CD14-positive monocyte (primary cell): ENCODE measurements at regions of chr6 and their contacts with region 1.

Region 1: DNA sequence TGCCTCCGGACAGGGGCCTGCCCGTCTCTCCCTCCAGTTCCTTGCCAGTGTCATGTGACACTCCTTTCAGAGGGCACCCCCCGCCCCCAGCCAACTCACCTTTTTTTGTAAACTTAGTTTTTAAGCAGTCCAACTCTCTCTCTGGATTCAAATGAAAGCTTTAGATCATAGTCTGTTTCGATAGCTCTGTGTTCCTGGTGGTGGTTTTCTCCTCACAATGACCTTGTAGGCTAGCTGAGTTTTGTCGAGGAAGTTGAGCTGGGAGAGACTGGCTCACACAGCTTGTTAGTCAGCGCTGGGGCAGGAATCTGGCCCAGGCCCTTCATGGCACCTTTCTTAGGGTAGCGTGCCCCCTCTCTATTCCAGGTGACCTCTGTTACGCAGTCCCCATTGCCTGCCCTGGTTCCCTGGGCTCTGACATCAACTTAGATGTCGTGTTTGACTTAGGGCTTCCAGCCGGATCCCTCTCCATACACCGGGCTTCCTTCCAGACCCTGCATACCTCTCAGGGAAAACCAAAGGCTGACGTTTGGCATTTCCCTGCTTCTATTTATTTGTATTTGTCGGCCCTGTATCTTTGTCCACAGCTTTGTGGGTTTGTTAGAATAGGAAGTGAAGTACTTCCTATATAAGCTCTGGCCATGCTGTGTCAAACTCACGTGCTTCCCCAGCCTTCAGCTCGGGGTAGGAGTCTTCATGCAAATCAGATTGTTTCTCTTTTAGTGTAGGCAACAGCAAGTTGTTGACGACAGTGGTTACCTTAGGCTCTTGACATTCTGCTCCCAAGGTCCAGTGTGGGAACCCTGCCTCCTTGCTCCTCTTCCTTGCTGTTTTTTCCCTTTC is 12.7 kb downstream of the IGF2R start:
- DNase-seq: peak; percentile 90 to 95 (median 95)
- H3K4me3 ChIP-seq: peak overlapping the region; percentile 10 to 59 (median 21)
- H3K4me3 Mint-ChIP-seq: peak overlapping the region; percentile 71 to 85
- H3K27ac ChIP-seq: peak overlapping the region; percentile 85 to 97
- H3K27ac Mint-ChIP-seq: peak overlapping the region; percentile 91 to 99 (median 96)
- H3K4me1 ChIP-seq: peaks cover 78 to 94% of the 10 kb centered on the region in 2 donors
- H3K4me1 Mint-ChIP-seq: peaks cover 92% of the 10 kb centered on the region
- H3K27me3 ChIP-seq: peaks cover 0 to 30% of the 10 kb centered on the region in 2 donors
- H3K27me3 Mint-ChIP-seq: peaks cover 37 to 51% (median 50%) of the 10 kb centered on the region in 3 donors
- CTCF ChIP-seq: no peak

Region 2: DNA sequence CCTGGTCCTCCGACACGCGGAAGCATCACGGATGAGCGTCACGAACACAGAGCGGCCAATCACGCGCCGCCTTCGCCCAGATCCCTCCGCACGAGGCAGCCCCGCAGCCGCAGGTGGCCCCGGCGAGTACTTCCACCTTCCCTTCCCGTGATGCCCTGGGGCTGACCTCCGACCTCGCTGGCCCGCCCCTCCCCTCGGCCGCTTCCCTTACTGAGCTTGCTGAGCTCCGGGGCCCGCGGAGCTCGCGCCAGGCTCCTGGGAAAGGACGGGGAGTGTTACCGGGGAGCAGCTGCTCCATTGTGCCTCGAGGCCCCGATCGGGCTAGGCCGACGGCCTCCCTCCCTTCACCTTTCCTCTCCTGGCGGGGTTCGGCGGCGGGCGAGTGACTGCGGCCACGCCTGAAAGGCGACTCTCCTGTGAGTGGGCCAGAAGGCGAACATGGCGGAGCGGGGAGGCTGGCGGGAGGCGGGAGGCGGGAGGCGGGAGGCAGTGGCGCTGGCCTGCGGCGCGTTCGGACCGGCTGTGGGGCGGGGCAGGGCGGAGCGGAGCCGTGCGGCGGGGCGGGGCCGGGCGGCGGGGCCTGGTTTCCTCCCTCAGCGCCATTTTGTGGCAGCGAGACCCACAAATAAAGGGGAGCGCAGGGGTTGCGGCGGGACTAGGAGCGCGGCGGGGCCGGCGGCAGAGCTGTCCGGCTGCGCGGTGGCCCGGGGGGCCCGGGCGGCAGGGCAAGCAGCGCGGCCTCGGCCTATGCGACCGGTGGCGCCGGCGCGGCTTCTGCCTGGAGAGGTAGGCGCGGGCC is 254.5 kb before region 1 on chr6 and contains the start of gene WTAP:
- intact Hi-C with region 1: loop called in 1 of 2 experiments (anchors 10 kb)
- DNase-seq: peak; percentile 90 to 96 (median 90)
- H3K4me3 ChIP-seq: peak within 1 kb of the TSS; percentile 82 to 98 (median 97)
- H3K4me3 Mint-ChIP-seq: peak within 1 kb of the TSS; percentile 89 to 92
- H3K27ac ChIP-seq: peak within 1 kb of the TSS; percentile 89 to 100
- H3K27ac Mint-ChIP-seq: peak within 1 kb of the TSS; percentile 95 to 98 (median 97)
- H3K4me1 ChIP-seq: peaks cover 27 to 44% of the 10 kb centered on the region in 2 donors
- H3K4me1 Mint-ChIP-seq: peaks cover 42% of the 10 kb centered on the region
- H3K27me3 ChIP-seq: no peaks in the 10 kb centered on the region
- H3K27me3 Mint-ChIP-seq: no peaks in the 10 kb centered on the region
- CTCF ChIP-seq: no peak
- polyA plus RNA-seq, gene WTAP: 50.8 to 95.9 (median 94.7) TPM

Region 3: DNA sequence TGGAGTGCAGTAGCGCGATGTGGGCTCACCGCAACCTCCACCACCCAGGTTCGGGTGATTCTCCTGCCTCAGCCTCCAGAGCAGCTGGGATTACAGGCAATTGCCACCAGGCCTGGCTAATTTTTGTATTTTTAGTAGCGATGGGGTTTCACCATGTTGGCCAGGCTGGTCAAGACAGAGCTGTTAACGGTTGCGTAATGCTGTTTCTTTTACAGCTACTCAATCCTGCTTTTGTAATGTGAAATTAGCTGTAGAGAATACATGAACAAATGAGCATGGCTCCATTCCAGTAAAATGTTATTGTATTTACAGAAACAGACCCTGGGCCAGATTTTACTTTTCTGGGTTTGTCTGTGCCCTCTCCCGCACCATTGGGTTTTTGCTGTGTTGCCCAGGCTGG is 179.7 kb before region 1 on chr6:
- intact Hi-C with region 1: no loop called
- DNase-seq: peak in 2 of 3 donors; percentile 10 to 35
- H3K4me3 ChIP-seq: no peak overlapping the region
- H3K4me3 Mint-ChIP-seq: no peak overlapping the region
- H3K27ac ChIP-seq: no peak overlapping the region
- H3K27ac Mint-ChIP-seq: peak overlapping the region in 4 of 7 donors; percentile 24 to 78 (median 51)
- H3K4me1 ChIP-seq: peaks cover 18 to 21% of the 10 kb centered on the region in 2 donors
- H3K4me1 Mint-ChIP-seq: peaks cover 19% of the 10 kb centered on the region
- H3K27me3 ChIP-seq: no peaks in the 10 kb centered on the region
- H3K27me3 Mint-ChIP-seq: no peaks in the 10 kb centered on the region
- CTCF ChIP-seq: no peak

Region 4: GRCh38 chr6:159941286-159942113 is 40.1 kb before region 1 on chr6:
- intact Hi-C with region 1: loop called in 1 of 2 experiments (anchors 5 kb)
- DNase-seq: peak; percentile 36 to 50 (median 49)
- H3K4me3 ChIP-seq: no peak overlapping the region
- H3K4me3 Mint-ChIP-seq: no peak overlapping the region
- H3K27ac ChIP-seq: no peak overlapping the region
- H3K27ac Mint-ChIP-seq: no peak overlapping the region
- H3K4me1 ChIP-seq: peaks cover 18 to 25% of the 10 kb centered on the region in 2 donors
- H3K4me1 Mint-ChIP-seq: peaks cover 28% of the 10 kb centered on the region
- H3K27me3 ChIP-seq: peaks cover 0 to 3% of the 10 kb centered on the region in 2 donors
- H3K27me3 Mint-ChIP-seq: peaks cover 9 to 27% (median 23%) of the 10 kb centered on the region in 3 donors
- CTCF ChIP-seq: peak; percentile 46

Region 5: GRCh38 chr6:159968440-159969203 is 13.0 kb before region 1 on chr6 and contains the start of gene IGF2R:
- intact Hi-C with region 1: loop called (anchors 1 to 2 kb)
- DNase-seq: peak; percentile 78 to 88 (median 85)
- H3K4me3 ChIP-seq: peak within 1 kb of the TSS; percentile 59 to 89 (median 61)
- H3K4me3 Mint-ChIP-seq: peak within 1 kb of the TSS; percentile 95 to 96
- H3K27ac ChIP-seq: peak within 1 kb of the TSS; percentile 89 to 91
- H3K27ac Mint-ChIP-seq: peak within 1 kb of the TSS; percentile 84 to 97 (median 92)
- H3K4me1 ChIP-seq: peaks cover 68 to 78% of the 10 kb centered on the region in 2 donors
- H3K4me1 Mint-ChIP-seq: peaks cover 68% of the 10 kb centered on the region
- H3K27me3 ChIP-seq: no peaks in the 10 kb centered on the region
- H3K27me3 Mint-ChIP-seq: peaks cover 7 to 11% (median 8%) of the 10 kb centered on the region in 3 donors
- CTCF ChIP-seq: peak; percentile 28
- polyA plus RNA-seq, gene IGF2R: 6.9 to 44.8 (median 8.2) TPM

Region 6: GRCh38 chr6:160088069-160088783 is 106.6 kb after region 1 on chr6:
- intact Hi-C with region 1: no loop called
- DNase-seq: no peak
- H3K4me3 ChIP-seq: no peak overlapping the region
- H3K4me3 Mint-ChIP-seq: no peak overlapping the region
- H3K27ac ChIP-seq: no peak overlapping the region
- H3K27ac Mint-ChIP-seq: peak overlapping the region in 2 of 7 donors; percentile 53 to 61
- H3K4me1 ChIP-seq: no peaks in the 10 kb centered on the region
- H3K4me1 Mint-ChIP-seq: no peaks in the 10 kb centered on the region
- H3K27me3 ChIP-seq: no peaks in the 10 kb centered on the region
- H3K27me3 Mint-ChIP-seq: peaks cover 0 to 3% (median 1%) of the 10 kb centered on the region in 3 donors
- CTCF ChIP-seq: no peak

Region 7: GRCh38 chr6:160248538-160248937 is 266.9 kb after region 1 on chr6:
- intact Hi-C with region 1: no loop called
- DNase-seq: no peak
- H3K4me3 ChIP-seq: no peak overlapping the region
- H3K4me3 Mint-ChIP-seq: no peak overlapping the region
- H3K27ac ChIP-seq: no peak overlapping the region
- H3K27ac Mint-ChIP-seq: no peak overlapping the region
- H3K4me1 ChIP-seq: no peaks in the 10 kb centered on the region
- H3K4me1 Mint-ChIP-seq: no peaks in the 10 kb centered on the region
- H3K27me3 ChIP-seq: no peaks in the 10 kb centered on the region
- H3K27me3 Mint-ChIP-seq: peaks cover 0 to 2% (median 2%) of the 10 kb centered on the region in 3 donors
- CTCF ChIP-seq: no peak